IMR-90 (cell line): ENCODE measurements at regions of chr3 and their contacts with region 1.

Region 1: DNA sequence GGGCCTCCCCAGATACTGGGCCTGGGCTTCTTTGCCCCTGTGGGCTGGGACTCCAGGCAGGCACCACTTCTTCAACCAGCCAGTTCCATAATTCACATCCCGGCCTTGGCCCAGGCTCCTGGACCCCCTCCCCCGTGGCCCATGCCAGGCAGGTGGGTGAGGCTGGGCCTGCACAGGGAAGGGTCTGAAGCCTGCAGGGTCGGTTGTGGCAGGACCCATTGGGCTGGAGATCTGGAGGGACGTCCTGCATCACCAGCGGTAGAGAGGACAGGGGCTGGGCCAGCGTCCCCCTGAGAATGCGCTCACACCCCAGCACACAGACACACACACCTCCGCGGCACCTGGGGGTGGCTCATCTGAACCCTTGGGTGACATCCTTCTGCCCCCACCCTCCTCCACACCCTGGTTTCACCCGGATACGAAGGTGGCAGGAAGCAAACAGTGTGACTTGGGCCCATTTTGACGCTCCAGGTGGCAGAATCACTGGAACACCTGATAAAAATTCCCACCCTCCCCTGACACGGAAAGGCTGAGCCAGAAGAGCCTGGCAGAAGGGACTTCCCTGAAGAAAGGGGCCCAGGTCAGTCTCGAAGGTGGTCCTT is 15.4 kb downstream of the ZDHHC19 start:
- DNase-seq: no peak
- ATAC-seq: no peak
- H3K4me3 ChIP-seq: no peak overlapping the region
- H3K27ac ChIP-seq: no peak overlapping the region
- H3K4me1 ChIP-seq: no peaks in the 10 kb centered on the region
- H3K27me3 ChIP-seq: no peaks in the 10 kb centered on the region
- CTCF ChIP-seq: no peak
- POLR2A ChIP-seq: no peak
- RAD21 ChIP-seq: no peak

Region 2: GRCh38 chr3:195863121-195864006 is 332.4 kb before region 1 on chr3:
- CTCF ChIA-PET with region 1: no interaction called
- POLR2A ChIA-PET with region 1: no interaction called
- dilution Hi-C with region 1: no loop called
- in situ Hi-C with region 1: no loop called
- intact Hi-C with region 1: no loop called
- DNase-seq: peak; percentile 89
- ATAC-seq: peak; percentile 99
- H3K4me3 ChIP-seq: no peak overlapping the region
- H3K27ac ChIP-seq: no peak overlapping the region
- H3K4me1 ChIP-seq: 0 out of 2 replicates have a peak, but pooled peaks cover 2% of the 10 kb centered on the region
- H3K27me3 ChIP-seq: no peaks in the 10 kb centered on the region
- CTCF ChIP-seq: peak; percentile 97
- POLR2A ChIP-seq: no peak
- RAD21 ChIP-seq: peak; percentile 91

Region 3: GRCh38 chr3:196020373-196020772 is 175.4 kb before region 1 on chr3:
- CTCF ChIA-PET with region 1: no interaction called
- POLR2A ChIA-PET with region 1: no interaction called
- dilution Hi-C with region 1: no loop called
- in situ Hi-C with region 1: no loop called
- intact Hi-C with region 1: loop called (anchors 1 kb)
- DNase-seq: no peak
- ATAC-seq: no peak
- H3K4me3 ChIP-seq: no peak overlapping the region
- H3K27ac ChIP-seq: no peak overlapping the region
- H3K4me1 ChIP-seq: no peaks in the 10 kb centered on the region
- H3K27me3 ChIP-seq: peaks cover 13% of the 10 kb centered on the region
- CTCF ChIP-seq: no peak
- POLR2A ChIP-seq: no peak
- RAD21 ChIP-seq: no peak

Region 4: DNA sequence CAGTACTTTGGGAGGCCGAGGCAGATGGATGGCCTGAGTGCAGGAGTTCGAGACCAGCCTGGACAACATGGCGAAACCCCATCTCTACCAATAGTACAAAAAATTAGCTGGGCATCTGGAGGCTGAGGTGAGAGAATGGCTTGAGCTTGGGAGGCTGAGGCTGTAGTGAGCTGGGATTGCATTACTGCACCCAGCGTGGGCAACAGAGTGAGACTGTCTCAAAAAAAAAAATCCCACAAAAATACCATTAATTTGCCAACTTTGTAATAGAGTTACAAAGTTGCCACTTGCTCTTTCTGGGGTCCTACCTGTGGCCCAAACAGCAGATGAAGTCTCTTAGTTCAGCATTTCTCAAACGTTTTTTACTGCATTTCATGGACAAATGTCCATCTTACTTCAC is 107.9 kb before region 1 on chr3:
- CTCF ChIA-PET with region 1: no interaction called
- POLR2A ChIA-PET with region 1: no interaction called
- dilution Hi-C with region 1: no loop called
- in situ Hi-C with region 1: no loop called
- intact Hi-C with region 1: no loop called
- DNase-seq: no peak
- ATAC-seq: no peak
- H3K4me3 ChIP-seq: no peak overlapping the region
- H3K27ac ChIP-seq: no peak overlapping the region
- H3K4me1 ChIP-seq: no peaks in the 10 kb centered on the region
- H3K27me3 ChIP-seq: peaks cover 1% of the 10 kb centered on the region; the same call in 1 of the 2 replicates
- CTCF ChIP-seq: no peak
- POLR2A ChIP-seq: no peak
- RAD21 ChIP-seq: no peak

Region 5: GRCh38 chr3:196803891-196804468 is 608.2 kb after region 1 on chr3:
- CTCF ChIA-PET with region 1: no interaction called
- POLR2A ChIA-PET with region 1: no interaction called
- dilution Hi-C with region 1: no loop called
- in situ Hi-C with region 1: no loop called
- intact Hi-C with region 1: no loop called
- DNase-seq: no peak
- ATAC-seq: no peak
- H3K4me3 ChIP-seq: no peak overlapping the region
- H3K27ac ChIP-seq: no peak overlapping the region
- H3K4me1 ChIP-seq: 0 out of 2 replicates have a peak, but pooled peaks cover 1% of the 10 kb centered on the region
- H3K27me3 ChIP-seq: no peaks in the 10 kb centered on the region
- CTCF ChIP-seq: no peak
- POLR2A ChIP-seq: no peak
- RAD21 ChIP-seq: no peak